ENCODE measurements at regions of chr16 and their contacts with region 1.

Region 1: DNA sequence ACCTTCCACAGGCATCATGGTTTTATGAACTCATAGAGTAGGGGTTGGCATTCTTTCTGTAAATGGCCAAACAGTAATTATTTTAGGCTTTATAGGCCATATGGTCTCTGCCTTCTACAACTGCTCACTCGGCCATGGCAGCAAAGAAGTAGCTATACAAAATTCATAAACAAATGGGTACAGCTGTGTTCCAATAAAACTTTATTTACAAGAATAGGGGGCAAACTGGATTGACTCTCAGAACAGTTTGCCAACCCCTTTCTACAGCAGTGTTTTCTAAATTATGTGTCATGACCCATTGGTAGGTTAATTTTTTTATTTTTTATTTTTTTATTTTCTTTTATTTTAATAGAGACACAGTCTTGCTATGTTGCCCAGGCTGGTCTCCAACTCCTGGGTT is 20.4 kb downstream of the GOT2 start:
- DNase-seq: no peak
- H3K4me3 ChIP-seq: no peak overlapping the region
- H3K27ac ChIP-seq: no peak overlapping the region
- H3K4me1 ChIP-seq: no peaks in the 10 kb centered on the region
- H3K27me3 ChIP-seq: no peaks in the 10 kb centered on the region
- CTCF ChIP-seq: no peak
- POLR2A ChIP-seq: no peak

Region 2: GRCh38 chr16:58670177-58670576 is 43.6 kb before region 1 on chr16:
- intact Hi-C with region 1: loop called (anchors 2 kb)
- DNase-seq: no peak
- H3K4me3 ChIP-seq: no peak overlapping the region
- H3K27ac ChIP-seq: no peak overlapping the region
- H3K4me1 ChIP-seq: no peaks in the 10 kb centered on the region
- H3K27me3 ChIP-seq: no peaks in the 10 kb centered on the region
- CTCF ChIP-seq: no peak
- POLR2A ChIP-seq: no peak

Region 3: GRCh38 chr16:58906981-58907715 is 193.4 kb after region 1 on chr16:
- intact Hi-C with region 1: no loop called
- DNase-seq: no peak
- H3K4me3 ChIP-seq: no peak overlapping the region
- H3K27ac ChIP-seq: no peak overlapping the region
- H3K4me1 ChIP-seq: no peaks in the 10 kb centered on the region
- H3K27me3 ChIP-seq: no peaks in the 10 kb centered on the region
- CTCF ChIP-seq: no peak
- POLR2A ChIP-seq: no peak